ENCODE measurements at regions of chr19 and their contacts with region 1.

Region 1: DNA sequence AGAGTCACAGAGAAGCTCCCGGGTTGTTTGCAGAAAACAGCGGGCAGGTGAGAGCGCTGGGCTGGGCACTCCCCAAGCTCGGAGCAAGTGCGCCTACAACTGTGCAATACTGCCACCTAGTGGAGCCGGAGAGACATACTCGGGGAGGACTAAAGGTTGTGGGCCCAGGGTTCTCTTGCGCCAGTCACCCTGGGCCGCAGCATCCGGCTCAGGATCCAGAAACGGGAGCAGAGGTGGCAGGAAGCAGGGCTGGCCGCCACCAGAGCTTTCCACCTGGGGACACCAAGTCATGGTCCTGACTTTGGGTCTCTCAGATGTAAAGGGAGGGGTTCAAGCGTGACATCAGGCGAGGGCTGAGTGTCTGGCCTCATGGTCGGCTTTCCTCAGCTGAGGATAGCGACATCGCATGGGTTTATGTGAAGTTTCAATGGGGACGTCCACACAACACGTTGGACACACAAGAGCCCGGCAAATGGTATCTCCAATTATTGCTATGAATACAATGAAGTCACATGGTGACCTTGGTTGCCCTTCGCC is 11.2 kb upstream of the KLK4 start:
- DNase-seq: peak; percentile 86
- ATAC-seq: peak; percentile 100
- H3K4me3 Mint-ChIP-seq: no peak overlapping the region
- H3K27ac Mint-ChIP-seq: no peak overlapping the region
- H3K4me1 Mint-ChIP-seq: peaks cover 12% of the 10 kb centered on the region
- H3K27me3 Mint-ChIP-seq: peaks cover 33% of the 10 kb centered on the region

Region 2: DNA sequence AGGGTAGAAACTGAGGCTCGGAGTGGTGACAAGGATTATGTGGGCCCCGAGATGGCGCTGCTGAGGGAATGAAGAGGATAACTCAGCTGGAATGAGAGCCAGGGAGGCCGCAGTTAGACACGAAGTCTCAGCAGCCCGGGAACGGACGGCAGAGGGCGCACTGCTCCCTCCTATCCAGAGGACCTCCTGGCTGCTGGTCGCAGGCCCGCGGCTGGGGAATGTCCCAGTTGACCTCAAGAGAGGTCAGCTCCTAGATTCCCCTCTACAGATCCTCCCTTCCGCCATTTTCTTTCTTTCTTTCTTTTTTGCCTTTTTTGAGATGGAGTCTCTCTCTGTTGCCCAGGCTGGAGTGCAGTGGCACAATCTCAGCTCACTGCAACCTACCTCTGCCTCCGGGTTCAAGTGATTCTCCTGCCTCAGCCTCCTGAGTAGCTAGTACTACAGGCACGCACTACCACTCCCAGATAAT is 384.6 kb before region 1 on chr19:
- CTCF ChIA-PET with region 1: interaction called, 16 read pairs
- DNase-seq: peak; percentile 71
- ATAC-seq: peak; percentile 57
- H3K4me3 Mint-ChIP-seq: no peak overlapping the region
- H3K27ac Mint-ChIP-seq: no peak overlapping the region
- H3K4me1 Mint-ChIP-seq: no peaks in the 10 kb centered on the region
- H3K27me3 Mint-ChIP-seq: no peaks in the 10 kb centered on the region

Region 3: GRCh38 chr19:50669302-50670101 is 252.9 kb before region 1 on chr19:
- CTCF ChIA-PET with region 1: interaction called, 10 read pairs
- DNase-seq: peak; percentile 46
- ATAC-seq: no peak
- H3K4me3 Mint-ChIP-seq: no peak overlapping the region
- H3K27ac Mint-ChIP-seq: no peak overlapping the region
- H3K4me1 Mint-ChIP-seq: no peaks in the 10 kb centered on the region
- H3K27me3 Mint-ChIP-seq: peaks cover 43% of the 10 kb centered on the region

Region 4: DNA sequence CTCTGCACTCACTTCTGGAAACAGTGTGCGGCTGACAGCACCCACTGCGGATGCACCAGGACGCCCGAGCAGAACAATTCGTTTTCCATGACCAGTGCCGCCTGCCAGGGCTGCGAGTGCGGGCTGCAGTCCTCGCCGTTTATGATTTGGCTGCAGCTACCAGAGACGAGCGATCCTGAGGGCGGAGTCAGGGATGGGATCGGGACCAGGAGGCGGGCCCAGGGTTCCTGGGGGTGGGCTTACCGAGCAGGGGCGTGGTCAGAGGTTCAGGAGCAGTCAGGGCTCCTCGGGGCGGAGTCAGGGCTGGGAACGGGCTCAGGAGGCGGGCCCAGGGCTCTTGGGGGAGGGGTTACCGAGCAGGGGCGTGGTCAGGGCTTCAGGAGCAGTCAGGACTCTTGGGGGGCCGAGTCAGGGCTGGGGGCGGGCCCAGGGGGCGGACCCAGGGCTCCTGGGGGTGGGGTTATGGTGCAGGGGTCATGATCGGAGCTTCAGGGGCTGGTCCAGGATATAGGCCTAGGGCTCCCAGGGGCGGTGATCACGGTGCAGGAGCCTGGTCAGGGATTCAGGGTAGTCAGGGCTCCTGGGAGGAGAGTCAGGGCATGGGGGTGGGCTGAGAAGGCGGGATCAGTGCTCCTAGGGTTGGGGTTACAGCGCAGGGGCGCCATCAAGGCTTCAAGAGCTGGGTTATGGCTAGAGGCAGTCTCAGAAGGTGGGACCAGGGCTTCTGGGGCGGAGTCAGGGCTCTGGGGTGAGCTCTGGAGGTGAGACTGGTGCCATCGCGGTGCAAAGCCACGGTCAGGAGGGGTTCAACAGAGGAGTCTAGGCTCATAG is 12.9 kb before region 1 on chr19:
- CTCF ChIA-PET with region 1: interaction called, 23 read pairs
- DNase-seq: peak; percentile 51
- ATAC-seq: peak; percentile 60
- H3K4me3 Mint-ChIP-seq: no peak overlapping the region
- H3K27ac Mint-ChIP-seq: no peak overlapping the region
- H3K4me1 Mint-ChIP-seq: peaks cover 1% of the 10 kb centered on the region
- H3K27me3 Mint-ChIP-seq: peaks cover 38% of the 10 kb centered on the region

Region 5: DNA sequence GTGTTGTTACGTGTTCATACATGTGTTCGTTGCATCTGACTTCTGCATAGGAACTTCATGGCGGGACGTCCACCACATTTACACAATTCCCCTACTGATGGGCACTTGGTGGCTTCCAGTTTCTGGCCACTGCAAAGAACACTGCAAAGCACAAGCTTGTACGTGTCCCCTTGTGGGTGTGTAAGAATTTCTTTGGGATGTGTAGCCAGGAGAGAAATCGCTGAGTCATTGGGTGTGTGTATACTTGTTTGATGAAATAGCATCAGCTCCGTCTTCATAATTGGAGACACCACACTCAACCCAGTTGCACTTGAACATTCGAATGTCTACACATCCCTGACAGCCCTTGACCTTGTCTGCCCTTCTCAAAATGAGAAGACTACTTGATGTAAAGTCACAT is 11.3 kb after region 1 on chr19:
- CTCF ChIA-PET with region 1: interaction called, 14 read pairs
- DNase-seq: no peak
- ATAC-seq: no peak
- H3K4me3 Mint-ChIP-seq: no peak overlapping the region
- H3K27ac Mint-ChIP-seq: no peak overlapping the region
- H3K4me1 Mint-ChIP-seq: peaks cover 2% of the 10 kb centered on the region
- H3K27me3 Mint-ChIP-seq: peaks cover 17% of the 10 kb centered on the region